Activated CD4-positive, alpha-beta memory T cell treated with anti-CD3 and anti-CD28 coated beads, Interleukin-2, amount 10 ng/mL, durations not matched to agents 7 days and 5 days (primary cell): ENCODE measurements at regions of chr17 and their contacts with region 1.

Region 1: DNA sequence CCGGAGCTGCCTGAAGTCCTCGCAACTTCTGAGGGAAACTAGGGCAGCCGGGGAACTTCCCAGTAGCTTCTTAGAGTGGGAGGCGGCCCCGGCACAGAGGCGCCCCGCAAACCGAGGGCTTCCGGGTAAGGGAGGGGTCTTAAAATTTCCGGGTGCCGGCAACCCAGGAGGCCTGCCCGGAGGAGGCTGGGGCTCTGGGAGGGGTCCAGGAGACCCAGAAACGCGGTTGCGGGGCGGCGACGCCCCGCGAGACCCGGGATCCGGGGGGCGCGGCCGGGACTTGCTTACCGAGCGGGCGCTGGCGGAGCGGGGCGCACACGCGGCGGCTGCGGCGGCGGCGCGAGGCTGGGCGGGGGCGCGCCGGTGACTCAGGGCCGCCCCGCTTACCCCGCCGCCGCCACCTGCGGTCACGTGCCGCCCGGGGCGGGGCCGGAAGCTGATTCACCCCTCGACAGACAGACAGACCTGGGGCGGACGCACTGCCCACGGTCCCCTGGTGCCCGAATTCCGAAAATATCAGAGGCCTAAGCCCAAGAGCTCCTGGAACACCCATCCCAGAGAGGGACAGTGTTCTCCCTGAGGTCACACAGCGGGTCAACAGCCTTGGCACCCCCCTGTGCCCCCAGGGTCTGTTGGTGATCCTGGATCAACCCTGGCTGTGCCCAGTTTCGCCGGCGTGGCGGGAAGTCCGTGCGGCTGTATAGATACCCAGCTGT is at the start of gene FAM83G:
- DNase-seq: peak; percentile 87
- H3K4me3 Mint-ChIP-seq: peak within 1 kb of the TSS; percentile 81
- H3K27ac Mint-ChIP-seq: peak within 1 kb of the TSS; percentile 64
- H3K4me1 Mint-ChIP-seq: peaks cover 29% of the 10 kb centered on the region
- H3K27me3 Mint-ChIP-seq: peaks cover 14% of the 10 kb centered on the region
- total RNA-seq, gene FAM83G: 6.4 to 6.5 TPM

Region 2: DNA sequence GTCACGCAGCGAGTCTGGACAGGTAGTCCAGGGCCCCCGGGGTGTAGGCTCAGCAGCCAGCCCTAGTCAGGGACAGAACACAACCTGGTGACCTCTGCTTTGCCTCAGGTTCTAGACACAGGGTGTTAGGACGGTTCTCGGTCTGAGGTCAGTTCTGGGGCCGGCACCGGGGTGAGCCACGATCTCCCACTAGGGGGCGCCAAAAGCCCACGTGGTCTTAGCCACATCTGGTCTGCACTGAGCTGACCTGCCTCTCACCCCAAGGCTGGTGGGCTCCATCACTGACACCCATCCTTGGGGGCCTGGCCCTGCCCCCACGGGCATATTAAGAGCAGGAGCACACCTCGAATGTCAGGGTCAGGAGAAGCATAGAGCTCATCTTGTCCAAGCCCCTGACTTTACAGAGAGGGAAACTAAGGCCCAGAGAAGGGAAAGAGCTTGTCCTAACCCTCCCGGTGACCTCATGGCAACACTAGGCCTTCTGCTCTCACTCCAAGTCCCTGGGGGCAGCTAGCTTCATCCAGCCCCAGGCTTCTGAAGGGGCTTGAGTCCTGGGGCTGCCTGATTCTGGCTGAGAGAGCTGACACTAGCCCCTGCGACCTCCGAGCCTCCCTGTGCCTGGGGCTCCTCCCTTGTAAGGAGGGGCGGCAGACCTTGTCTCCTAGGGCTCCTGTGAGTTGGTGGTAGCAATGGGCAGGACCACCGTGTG is 43.6 kb before region 1 on chr17:
- CTCF ChIA-PET with region 1: interaction called, 15 read pairs
- POLR2A ChIA-PET with region 1: interaction called, 4 read pairs
- DNase-seq: peak; percentile 80
- H3K4me3 Mint-ChIP-seq: no peak overlapping the region
- H3K27ac Mint-ChIP-seq: no peak overlapping the region
- H3K4me1 Mint-ChIP-seq: peaks cover 6% of the 10 kb centered on the region
- H3K27me3 Mint-ChIP-seq: peaks cover 2% of the 10 kb centered on the region

Region 3: DNA sequence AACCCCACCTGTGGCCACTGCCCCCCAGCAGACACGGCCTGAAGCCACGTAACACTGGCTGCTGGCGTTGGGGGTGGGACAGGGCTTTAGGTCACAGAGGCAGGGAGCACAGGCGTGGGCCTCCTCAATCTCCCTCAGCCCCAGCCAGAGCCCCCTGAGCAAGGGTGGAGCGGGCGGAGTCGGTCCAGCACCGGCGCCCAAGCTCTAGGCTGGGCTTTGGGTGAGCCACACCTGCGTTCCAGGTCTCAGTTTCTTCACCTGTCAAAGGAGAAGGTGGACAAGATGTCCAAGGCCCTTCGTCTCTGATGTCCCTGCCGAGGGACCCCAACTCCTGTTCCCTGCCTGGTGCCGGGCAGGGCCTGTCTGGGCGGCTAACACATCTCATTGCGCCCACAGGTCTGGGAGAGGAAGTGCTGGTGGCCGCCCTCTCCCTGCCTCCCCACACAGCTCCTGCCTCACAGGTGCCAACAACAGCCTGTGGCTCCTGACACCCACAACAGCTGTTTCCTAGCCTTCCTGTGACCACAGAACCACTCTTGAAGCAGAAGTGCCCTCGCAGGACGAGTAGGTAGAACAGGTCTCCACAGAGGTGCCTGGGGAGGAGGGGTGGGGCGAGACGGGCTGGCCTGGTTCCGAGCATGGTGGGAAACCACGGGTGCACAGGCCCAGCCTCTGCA is 12.0 kb before region 1 on chr17:
- CTCF ChIA-PET with region 1: no interaction called
- POLR2A ChIA-PET with region 1: interaction called, 19 read pairs
- DNase-seq: peak; percentile 50
- H3K4me3 Mint-ChIP-seq: no peak overlapping the region
- H3K27ac Mint-ChIP-seq: no peak overlapping the region
- H3K4me1 Mint-ChIP-seq: peaks cover 15% of the 10 kb centered on the region
- H3K27me3 Mint-ChIP-seq: no peaks in the 10 kb centered on the region

Region 4: DNA sequence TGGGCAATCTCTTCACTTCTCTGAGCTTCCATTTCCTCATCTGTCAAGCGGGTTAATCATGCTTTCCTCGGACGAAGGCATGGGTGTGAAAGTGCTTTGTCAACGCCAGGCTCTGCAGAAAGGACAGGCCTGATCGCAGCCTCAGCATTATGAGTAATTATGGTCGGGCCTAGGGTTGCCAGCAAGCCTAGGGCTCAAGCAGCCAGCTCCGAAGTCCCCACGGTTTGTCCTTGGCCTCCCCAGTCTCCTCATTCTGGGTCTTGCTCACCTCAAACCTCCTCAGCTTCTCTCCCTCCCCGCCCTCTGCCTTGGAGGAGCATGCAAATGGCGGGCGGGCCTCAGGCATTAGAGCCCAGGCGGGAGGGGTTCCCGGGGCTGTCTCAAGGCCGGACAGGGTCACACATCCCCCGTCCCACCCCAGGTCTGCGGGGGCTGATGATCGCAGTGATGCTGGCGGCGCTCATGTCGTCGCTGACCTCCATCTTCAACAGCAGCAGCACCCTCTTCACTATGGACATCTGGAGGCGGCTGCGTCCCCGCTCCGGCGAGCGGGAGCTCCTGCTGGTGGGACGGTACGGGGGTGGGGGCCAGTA is 10.1 kb after region 1 on chr17:
- CTCF ChIA-PET with region 1: no interaction called
- POLR2A ChIA-PET with region 1: interaction called, 13 read pairs
- DNase-seq: no peak
- H3K4me3 Mint-ChIP-seq: no peak overlapping the region
- H3K27ac Mint-ChIP-seq: no peak overlapping the region
- H3K4me1 Mint-ChIP-seq: no peaks in the 10 kb centered on the region
- H3K27me3 Mint-ChIP-seq: peaks cover 5% of the 10 kb centered on the region